B cell (primary cell): ENCODE measurements at regions of chr20 and their contacts with region 1.

Region 1: GRCh38 chr20:59571551-59572314 is 32.6 kb upstream of the PHACTR3 start:
- DNase-seq: peak; percentile 60
- ATAC-seq: peak; percentile 71
- H3K4me3 ChIP-seq: peak overlapping the region in 4 of 5 experiments; percentile 18 to 55 (median 46)
- H3K4me3 Mint-ChIP-seq: peak overlapping the region; percentile 68
- H3K27ac ChIP-seq: no peak overlapping the region
- H3K27ac Mint-ChIP-seq: no peak overlapping the region
- H3K4me1 ChIP-seq: peaks cover 5 to 6% of the 10 kb centered on the region in 2 donors
- H3K4me1 Mint-ChIP-seq: peaks cover 3% of the 10 kb centered on the region
- H3K27me3 ChIP-seq: peaks cover 0 to 3% (median 3%) of the 10 kb centered on the region in 4 experiments
- H3K27me3 Mint-ChIP-seq: peaks cover 42% of the 10 kb centered on the region
- CTCF ChIP-seq: peak; percentile 100

Region 2: DNA sequence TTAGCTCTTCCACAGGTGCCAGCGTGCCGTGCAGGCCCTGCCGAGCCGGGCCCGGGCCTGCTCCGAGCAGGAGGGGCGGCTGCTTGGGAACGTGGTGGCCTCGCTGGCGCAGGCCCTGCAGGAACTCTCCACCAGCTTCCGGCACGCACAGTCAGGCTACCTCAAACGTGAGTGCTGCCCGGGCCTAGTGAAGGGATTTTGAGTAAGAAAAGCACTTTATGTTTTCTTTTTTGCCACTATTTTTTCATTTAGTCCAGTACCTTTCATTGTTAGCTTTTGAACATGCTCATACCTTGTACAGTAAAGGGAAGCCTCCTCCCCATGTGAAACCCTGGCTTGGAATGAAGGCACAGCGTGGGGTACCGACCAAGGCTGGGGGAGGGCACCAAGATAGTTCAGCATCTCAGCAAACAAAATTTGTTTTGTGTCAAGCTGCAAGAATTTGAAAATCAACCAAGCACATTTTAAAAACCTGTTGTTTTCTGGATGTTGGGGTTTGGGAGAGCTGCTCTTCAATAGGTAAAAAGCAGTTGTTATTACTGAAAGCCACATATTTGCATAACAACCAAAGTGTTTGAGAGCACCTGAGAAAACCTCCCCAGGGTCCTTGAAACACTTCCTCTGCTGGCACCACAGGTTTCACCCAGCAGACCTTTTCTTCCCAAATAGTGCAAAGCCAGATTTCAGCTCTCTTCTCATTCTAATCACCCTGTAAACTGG is 902.3 kb before region 1 on chr20:
- CTCF ChIA-PET with region 1: no interaction called
- POLR2A ChIA-PET with region 1: no interaction called
- intact Hi-C with region 1: no loop called
- DNase-seq: peak; percentile 35
- ATAC-seq: peak; percentile 28
- H3K4me3 ChIP-seq: no peak overlapping the region
- H3K4me3 Mint-ChIP-seq: no peak overlapping the region
- H3K27ac ChIP-seq: no peak overlapping the region
- H3K27ac Mint-ChIP-seq: no peak overlapping the region
- H3K4me1 ChIP-seq: peaks cover 8 to 13% of the 10 kb centered on the region in 2 donors
- H3K4me1 Mint-ChIP-seq: peaks cover 13% of the 10 kb centered on the region
- H3K27me3 ChIP-seq: no peaks in the 10 kb centered on the region
- H3K27me3 Mint-ChIP-seq: no peaks in the 10 kb centered on the region
- CTCF ChIP-seq: no peak

Region 3: DNA sequence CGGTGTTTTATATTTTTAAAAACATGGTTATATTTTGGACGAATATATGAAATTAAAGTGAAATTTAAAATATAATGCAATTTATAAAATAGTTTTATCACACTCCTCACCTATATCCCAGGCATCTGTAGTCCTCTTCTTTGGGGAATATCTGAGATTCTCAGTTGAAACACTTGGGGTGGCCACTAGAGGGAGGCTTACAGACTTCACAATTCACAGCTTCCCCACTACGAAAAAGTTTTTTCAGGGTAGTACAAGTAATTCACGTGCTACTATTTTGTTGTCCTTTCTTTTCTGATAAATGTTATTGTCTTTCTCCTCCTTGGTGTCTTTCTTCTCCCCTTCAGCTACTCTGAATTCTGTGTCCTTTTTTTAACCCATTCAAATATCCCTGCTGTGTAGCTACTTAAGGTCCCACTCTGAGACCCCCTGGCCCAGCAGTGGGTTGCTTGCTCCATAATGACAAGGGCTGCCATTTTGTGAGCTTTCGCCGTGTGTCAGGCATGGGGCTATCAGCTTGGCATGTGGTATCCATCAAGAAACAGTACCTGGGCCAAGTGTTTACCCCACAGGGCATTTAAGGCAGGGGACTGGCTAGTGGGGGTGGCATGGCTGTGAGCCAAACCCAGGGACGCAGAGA is 11.0 kb before region 1 on chr20:
- CTCF ChIA-PET with region 1: interaction called, 27 read pairs
- POLR2A ChIA-PET with region 1: no interaction called
- intact Hi-C with region 1: no loop called
- DNase-seq: no peak
- ATAC-seq: no peak
- H3K4me3 ChIP-seq: no peak overlapping the region
- H3K4me3 Mint-ChIP-seq: no peak overlapping the region
- H3K27ac ChIP-seq: no peak overlapping the region
- H3K27ac Mint-ChIP-seq: no peak overlapping the region
- H3K4me1 ChIP-seq: no peaks in the 10 kb centered on the region
- H3K4me1 Mint-ChIP-seq: no peaks in the 10 kb centered on the region
- H3K27me3 ChIP-seq: peaks cover 0 to 3% (median 0%) of the 10 kb centered on the region in 4 experiments
- H3K27me3 Mint-ChIP-seq: peaks cover 5% of the 10 kb centered on the region
- CTCF ChIP-seq: peak; percentile 40

Region 4: GRCh38 chr20:59583428-59584045 is 11.8 kb after region 1 on chr20:
- CTCF ChIA-PET with region 1: interaction called, 26 read pairs
- POLR2A ChIA-PET with region 1: no interaction called
- intact Hi-C with region 1: no loop called
- DNase-seq: no peak
- ATAC-seq: no peak
- H3K4me3 ChIP-seq: no peak overlapping the region
- H3K4me3 Mint-ChIP-seq: no peak overlapping the region
- H3K27ac ChIP-seq: no peak overlapping the region
- H3K27ac Mint-ChIP-seq: no peak overlapping the region
- H3K4me1 ChIP-seq: no peaks in the 10 kb centered on the region
- H3K4me1 Mint-ChIP-seq: no peaks in the 10 kb centered on the region
- H3K27me3 ChIP-seq: peaks cover 0 to 2% (median 0%) of the 10 kb centered on the region in 4 experiments
- H3K27me3 Mint-ChIP-seq: peaks cover 13% of the 10 kb centered on the region
- CTCF ChIP-seq: no peak